ENCODE measurements at regions of chr12 and their contacts with region 1.

Region 1: DNA sequence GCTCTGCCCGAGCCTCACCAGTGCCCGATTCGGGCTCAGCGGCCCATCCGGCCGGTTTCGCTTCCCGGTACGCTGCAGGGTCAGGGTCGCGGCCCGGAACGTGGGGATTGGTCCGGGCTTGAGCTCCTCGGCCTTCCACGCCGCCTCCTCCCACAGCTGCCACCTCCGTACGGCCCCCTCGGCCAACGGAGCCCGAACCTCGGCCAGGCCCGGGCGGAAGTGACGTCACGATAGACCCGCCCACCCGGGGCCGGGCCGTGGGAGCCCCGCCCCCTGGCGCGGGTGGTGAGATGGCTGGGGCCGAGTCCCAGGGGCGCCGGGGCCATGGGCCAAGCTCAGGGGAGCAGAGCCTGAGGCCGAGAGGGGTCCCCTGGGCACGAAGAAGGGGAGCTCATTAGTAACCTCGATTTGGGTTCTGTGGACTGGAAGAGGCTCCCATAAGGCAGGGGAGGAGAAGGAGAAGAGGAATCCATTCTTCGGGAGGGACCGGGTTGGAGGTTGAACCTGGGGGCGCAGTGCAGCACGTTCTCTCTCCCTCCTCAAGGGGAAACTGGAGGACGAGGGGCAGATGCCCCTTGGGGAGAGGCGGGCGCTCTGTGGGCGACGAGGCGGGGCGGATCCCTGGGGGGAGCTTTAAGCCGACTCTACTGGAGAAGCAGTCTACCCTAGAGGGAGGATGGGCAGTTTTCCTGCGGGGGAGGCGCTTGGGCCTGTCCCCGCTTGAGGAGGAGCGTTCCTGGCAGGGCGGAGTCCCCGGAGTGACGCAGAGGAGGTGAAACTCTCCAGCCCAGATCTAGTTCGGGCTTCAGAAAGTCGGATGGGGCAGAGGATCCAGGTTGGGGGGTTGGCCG is at the start of gene MLF2:
- DNase-seq: peak; percentile 95 to 99 (median 97)
- ATAC-seq: peak; percentile 93
- H3K4me3 ChIP-seq: peak within 1 kb of the TSS; percentile 99
- H3K4me3 Mint-ChIP-seq: peak within 1 kb of the TSS; percentile 91 to 97 (median 96)
- H3K27ac ChIP-seq: peak within 1 kb of the TSS; percentile 97
- H3K27ac Mint-ChIP-seq: peak within 1 kb of the TSS; percentile 97 to 100 (median 99)
- H3K4me1 ChIP-seq: peaks cover 0 to 12% of the 10 kb centered on the region in 2 donors
- H3K4me1 Mint-ChIP-seq: peaks cover 10 to 44% (median 23%) of the 10 kb centered on the region in 7 donors
- H3K27me3 ChIP-seq: no peaks in the 10 kb centered on the region
- H3K27me3 Mint-ChIP-seq: no peaks in the 10 kb centered on the region
- total RNA-seq, gene MLF2: 84.6 to 141 (median 117) TPM

Region 2: DNA sequence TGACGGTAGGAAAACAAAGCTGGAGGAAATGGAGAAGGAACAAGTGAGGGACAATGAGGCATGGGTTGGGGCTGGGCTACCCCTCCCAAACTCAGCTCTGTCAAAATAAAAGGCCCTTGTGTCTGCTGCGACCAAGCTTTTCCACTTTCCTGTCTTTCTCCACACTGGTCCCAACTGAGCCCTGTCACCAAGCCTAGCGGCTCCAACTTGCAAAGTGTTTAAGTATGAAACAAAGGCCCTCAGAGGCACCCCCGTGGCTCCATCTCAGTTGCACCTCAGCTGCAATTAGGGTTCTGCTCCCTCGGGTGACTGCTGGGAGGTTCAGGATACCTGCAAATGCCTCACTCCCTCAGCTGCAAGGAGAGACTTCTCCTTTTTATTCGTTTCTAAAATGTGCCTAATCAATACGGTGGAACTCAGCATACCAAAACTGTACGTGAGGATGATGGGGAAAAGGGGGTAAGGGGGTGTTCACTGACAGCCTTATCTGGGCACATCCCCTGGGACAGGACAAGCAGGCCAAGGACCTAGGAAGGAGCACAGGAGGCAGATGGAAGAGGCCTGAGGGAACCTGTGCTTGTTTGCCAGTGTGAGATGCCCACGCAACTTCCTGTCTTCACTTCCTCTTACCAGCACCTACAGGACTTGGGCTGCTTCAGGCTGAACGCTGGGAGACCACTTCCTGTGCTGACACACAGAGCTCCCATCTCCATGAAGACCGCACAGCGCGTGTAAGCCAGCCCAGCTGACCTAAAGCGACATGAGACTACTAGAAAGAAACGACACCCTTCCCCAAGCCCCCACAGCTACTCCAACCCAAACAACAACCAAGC is 291.5 kb before region 1 on chr12:
- CTCF ChIA-PET with region 1: interaction called, 4 read pairs
- POLR2A ChIA-PET with region 1: no interaction called
- intact Hi-C with region 1: loop called in 1 of 2 experiments (anchors 1 kb)
- DNase-seq: peak; percentile 41 to 91 (median 87)
- ATAC-seq: peak; percentile 93
- H3K4me3 ChIP-seq: peak overlapping the region; percentile 54
- H3K4me3 Mint-ChIP-seq: peak overlapping the region; percentile 74 to 89 (median 85)
- H3K27ac ChIP-seq: peak overlapping the region; percentile 93
- H3K27ac Mint-ChIP-seq: peak overlapping the region; percentile 95 to 99 (median 98)
- H3K4me1 ChIP-seq: peaks cover 59 to 81% of the 10 kb centered on the region in 2 donors
- H3K4me1 Mint-ChIP-seq: peaks cover 66 to 95% (median 87%) of the 10 kb centered on the region in 7 donors
- H3K27me3 ChIP-seq: no peaks in the 10 kb centered on the region
- H3K27me3 Mint-ChIP-seq: no peaks in the 10 kb centered on the region

Region 3: DNA sequence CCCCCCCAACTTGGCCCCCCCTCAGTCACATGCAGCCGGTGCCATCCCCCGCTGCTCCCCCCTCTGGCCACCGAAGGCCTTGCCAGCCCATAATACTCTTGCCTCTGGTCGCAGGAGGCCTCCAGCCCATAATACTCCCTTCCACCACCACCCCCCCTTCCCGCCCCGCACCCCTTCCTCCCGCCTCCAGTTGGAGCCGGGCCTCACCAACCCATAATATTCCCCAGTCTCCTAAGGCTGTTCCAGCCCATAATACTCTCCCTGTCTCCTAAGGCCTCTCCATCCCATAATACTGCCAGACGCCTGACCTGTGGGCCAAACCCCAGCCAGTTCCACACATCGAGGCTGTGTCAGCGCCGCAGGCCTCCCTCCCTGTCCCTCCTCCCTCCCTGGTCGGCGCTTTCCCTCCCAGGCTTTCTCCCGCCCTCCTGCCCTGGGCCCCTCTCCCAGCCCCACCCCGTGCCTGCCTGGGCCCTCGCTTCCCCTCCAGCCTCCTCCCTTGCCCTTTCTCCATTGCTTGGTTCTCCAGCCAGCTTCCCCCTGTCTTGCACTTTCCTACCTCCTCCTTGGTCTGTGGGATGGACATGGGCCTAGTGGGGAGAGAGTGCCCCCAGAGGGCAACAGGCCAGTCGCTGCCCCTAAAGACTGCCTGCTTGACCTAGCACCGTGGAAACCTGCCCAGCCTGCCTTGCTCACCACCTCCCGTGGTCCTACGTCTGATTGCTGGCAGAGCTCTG is 139.2 kb before region 1 on chr12:
- CTCF ChIA-PET with region 1: interaction called, 6 read pairs
- POLR2A ChIA-PET with region 1: interaction called, 4 read pairs
- intact Hi-C with region 1: loop called in 1 of 2 experiments (anchors 1 kb)
- DNase-seq: peak in 2 of 9 donors; percentile 28 to 32
- ATAC-seq: peak; percentile 74
- H3K4me3 ChIP-seq: no peak overlapping the region
- H3K4me3 Mint-ChIP-seq: peak overlapping the region in 7 of 10 donors; percentile 30 to 70 (median 36)
- H3K27ac ChIP-seq: peak overlapping the region; percentile 64
- H3K27ac Mint-ChIP-seq: peak overlapping the region; percentile 51 to 91 (median 87)
- H3K4me1 ChIP-seq: peaks cover 20 to 30% of the 10 kb centered on the region in 2 donors
- H3K4me1 Mint-ChIP-seq: peaks cover 26 to 54% (median 48%) of the 10 kb centered on the region in 7 donors
- H3K27me3 ChIP-seq: no peaks in the 10 kb centered on the region
- H3K27me3 Mint-ChIP-seq: no peaks in the 10 kb centered on the region

Region 4: GRCh38 chr12:6735448-6736191 is 17.5 kb before region 1 on chr12:
- CTCF ChIA-PET with region 1: interaction called, 6 read pairs
- POLR2A ChIA-PET with region 1: interaction called, 5 read pairs
- intact Hi-C with region 1: loop called in 1 of 2 experiments (anchors 1 kb)
- DNase-seq: peak in 4 of 9 donors; percentile 23 to 39 (median 29)
- ATAC-seq: peak; percentile 81
- H3K4me3 ChIP-seq: no peak overlapping the region
- H3K4me3 Mint-ChIP-seq: no peak overlapping the region
- H3K27ac ChIP-seq: no peak overlapping the region
- H3K27ac Mint-ChIP-seq: peak overlapping the region in 1 of 9 donors; percentile 43
- H3K4me1 ChIP-seq: no peaks in the 10 kb centered on the region
- H3K4me1 Mint-ChIP-seq: peaks cover 0 to 10% (median 5%) of the 10 kb centered on the region in 7 donors
- H3K27me3 ChIP-seq: no peaks in the 10 kb centered on the region
- H3K27me3 Mint-ChIP-seq: no peaks in the 10 kb centered on the region

Region 5: DNA sequence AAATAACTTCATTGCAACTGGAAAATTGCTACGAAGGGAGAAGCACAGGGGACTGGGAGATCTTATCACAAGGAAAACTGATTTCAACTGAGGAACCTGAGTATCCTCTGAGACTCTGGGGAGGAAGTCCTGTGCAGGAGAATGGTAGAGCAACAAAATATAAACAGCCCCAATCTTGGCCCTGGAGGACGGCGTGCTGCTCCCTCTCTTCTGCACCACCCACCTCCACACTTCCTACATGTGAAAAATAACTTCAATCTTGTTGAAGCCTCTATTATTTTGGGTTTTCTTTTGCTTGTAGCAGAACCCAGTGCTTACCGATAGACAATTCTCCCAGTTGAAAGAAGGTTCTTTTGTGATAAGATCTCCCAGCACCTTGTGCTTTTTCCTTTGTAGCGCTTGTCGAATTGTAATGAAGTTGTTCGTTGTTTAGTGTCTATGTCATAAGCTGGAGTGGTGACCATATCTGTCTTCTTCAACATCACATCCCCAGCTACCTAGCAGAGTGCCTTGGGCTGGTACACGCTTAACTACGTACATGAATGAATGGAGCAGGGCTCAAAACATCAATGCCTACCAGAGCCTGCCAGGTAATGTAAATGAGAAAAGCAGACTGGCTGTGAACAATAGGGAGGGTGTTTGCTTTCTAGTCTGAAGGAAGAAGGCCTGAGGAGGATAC is 33.4 kb after region 1 on chr12:
- CTCF ChIA-PET with region 1: interaction called, 18 read pairs
- POLR2A ChIA-PET with region 1: interaction called, 40 read pairs
- intact Hi-C with region 1: loop called (anchors 1 kb)
- DNase-seq: peak in 7 of 9 donors; percentile 64 to 89 (median 87)
- ATAC-seq: peak; percentile 85
- H3K4me3 ChIP-seq: peak overlapping the region; percentile 4
- H3K4me3 Mint-ChIP-seq: peak overlapping the region; percentile 67 to 83 (median 76)
- H3K27ac ChIP-seq: peak overlapping the region; percentile 88
- H3K27ac Mint-ChIP-seq: peak overlapping the region; percentile 92 to 98 (median 96)
- H3K4me1 ChIP-seq: peaks cover 0 to 67% of the 10 kb centered on the region in 2 donors
- H3K4me1 Mint-ChIP-seq: peaks cover 35 to 79% (median 70%) of the 10 kb centered on the region in 7 donors
- H3K27me3 ChIP-seq: no peaks in the 10 kb centered on the region
- H3K27me3 Mint-ChIP-seq: no peaks in the 10 kb centered on the region

Region 6: DNA sequence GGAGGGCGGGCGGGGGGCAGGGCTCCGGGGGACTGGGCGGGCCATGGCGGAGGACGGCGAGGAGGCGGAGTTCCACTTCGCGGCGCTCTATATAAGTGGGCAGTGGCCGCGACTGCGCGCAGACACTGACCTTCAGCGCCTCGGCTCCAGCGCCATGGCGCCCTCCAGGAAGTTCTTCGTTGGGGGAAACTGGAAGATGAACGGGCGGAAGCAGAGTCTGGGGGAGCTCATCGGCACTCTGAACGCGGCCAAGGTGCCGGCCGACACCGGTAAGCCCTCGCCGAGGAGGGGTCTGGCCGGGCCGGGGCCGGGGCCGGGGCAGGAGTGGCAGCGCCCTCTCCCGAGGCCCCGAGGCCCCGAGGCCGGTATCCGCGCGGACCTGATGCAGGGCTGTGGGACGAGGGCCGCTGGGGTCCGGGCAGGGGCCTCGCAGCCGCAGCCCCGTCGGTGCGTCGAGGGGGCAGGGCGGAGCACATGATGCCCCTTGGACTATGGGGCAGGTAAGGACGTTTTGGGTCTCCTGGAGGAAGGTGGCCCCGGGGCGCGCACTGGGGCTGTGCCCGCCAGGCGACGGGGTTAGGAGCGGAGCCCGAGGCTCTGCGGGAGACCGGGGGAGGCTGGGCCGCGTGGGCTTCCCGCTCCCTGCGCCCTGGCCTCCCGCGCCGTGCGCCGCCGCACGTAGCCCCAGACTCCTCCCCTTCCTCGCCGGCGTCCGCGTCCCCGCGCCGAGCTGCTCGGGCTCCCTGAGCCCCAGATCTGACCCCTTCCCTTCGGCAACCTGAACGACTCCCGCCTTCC is 114.5 kb after region 1 on chr12 and contains the start of gene TPI1:
- CTCF ChIA-PET with region 1: interaction called, 4 read pairs
- POLR2A ChIA-PET with region 1: interaction called, 11 read pairs
- intact Hi-C with region 1: loop called in 1 of 2 experiments (anchors 1 kb)
- DNase-seq: peak; percentile 40 to 87 (median 52)
- ATAC-seq: peak; percentile 88
- H3K4me3 ChIP-seq: peak within 1 kb of the TSS; percentile 61
- H3K4me3 Mint-ChIP-seq: peak within 1 kb of the TSS; percentile 87 to 93 (median 91)
- H3K27ac ChIP-seq: peak within 1 kb of the TSS; percentile 82
- H3K27ac Mint-ChIP-seq: peak within 1 kb of the TSS; percentile 76 to 95 (median 87)
- H3K4me1 ChIP-seq: peaks cover 38 to 39% of the 10 kb centered on the region in 2 donors
- H3K4me1 Mint-ChIP-seq: peaks cover 34 to 55% (median 44%) of the 10 kb centered on the region in 7 donors
- H3K27me3 ChIP-seq: no peaks in the 10 kb centered on the region
- H3K27me3 Mint-ChIP-seq: no peaks in the 10 kb centered on the region
- total RNA-seq, gene TPI1: 89.7 to 1,293 (median 134) TPM

Region 7: GRCh38 chr12:6944381-6945186 is 191.4 kb after region 1 on chr12:
- CTCF ChIA-PET with region 1: no interaction called
- POLR2A ChIA-PET with region 1: no interaction called
- intact Hi-C with region 1: loop called in 1 of 2 experiments (anchors 2 kb)
- DNase-seq: peak; percentile 70 to 87 (median 84)
- ATAC-seq: peak; percentile 65
- H3K4me3 ChIP-seq: peak overlapping the region; percentile 94
- H3K4me3 Mint-ChIP-seq: peak overlapping the region; percentile 88 to 100 (median 96)
- H3K27ac ChIP-seq: peak overlapping the region; percentile 95
- H3K27ac Mint-ChIP-seq: peak overlapping the region; percentile 95 to 100 (median 98)
- H3K4me1 ChIP-seq: peaks cover 56% of the 10 kb centered on the region in 2 donors
- H3K4me1 Mint-ChIP-seq: peaks cover 42 to 75% (median 60%) of the 10 kb centered on the region in 7 donors
- H3K27me3 ChIP-seq: no peaks in the 10 kb centered on the region
- H3K27me3 Mint-ChIP-seq: no peaks in the 10 kb centered on the region

Region 8: GRCh38 chr12:7047306-7047705 is 294.2 kb after region 1 on chr12:
- CTCF ChIA-PET with region 1: no interaction called
- POLR2A ChIA-PET with region 1: no interaction called
- intact Hi-C with region 1: no loop called
- DNase-seq: no peak
- ATAC-seq: no peak
- H3K4me3 ChIP-seq: no peak overlapping the region
- H3K4me3 Mint-ChIP-seq: peak overlapping the region in 5 of 10 donors; percentile 8 to 71 (median 21)
- H3K27ac ChIP-seq: no peak overlapping the region
- H3K27ac Mint-ChIP-seq: peak overlapping the region in 4 of 9 donors; percentile 15 to 67 (median 45)
- H3K4me1 ChIP-seq: no peaks in the 10 kb centered on the region
- H3K4me1 Mint-ChIP-seq: peaks cover 0 to 21% (median 19%) of the 10 kb centered on the region in 7 donors
- H3K27me3 ChIP-seq: no peaks in the 10 kb centered on the region
- H3K27me3 Mint-ChIP-seq: peaks cover 0 to 24% (median 0%) of the 10 kb centered on the region in 5 donors

Region 9: DNA sequence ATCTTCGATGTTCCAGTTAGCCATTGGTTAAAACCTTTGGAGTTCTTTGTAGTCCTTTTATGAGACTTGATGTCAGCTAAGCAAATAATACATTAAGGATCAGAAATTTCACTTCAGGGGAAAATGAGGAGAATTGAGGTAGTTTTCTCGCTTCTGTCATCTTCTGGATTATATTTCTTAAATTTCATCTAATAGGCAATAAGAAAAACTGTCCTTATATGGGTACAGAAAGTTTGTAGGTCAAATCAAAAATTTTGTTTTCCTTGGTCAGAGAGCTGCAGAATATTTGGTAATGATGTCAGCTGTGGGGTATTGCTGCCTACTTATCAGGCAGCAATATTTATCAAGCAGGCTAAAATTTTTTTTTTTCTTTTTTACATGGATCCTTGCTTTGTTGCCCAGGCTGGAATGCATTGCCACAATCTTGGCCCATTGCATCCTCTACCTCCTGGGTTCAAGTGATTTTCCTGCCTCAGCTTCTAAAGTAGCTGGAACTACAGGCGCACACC is 1981.8 kb after region 1 on chr12:
- CTCF ChIA-PET with region 1: no interaction called
- POLR2A ChIA-PET with region 1: no interaction called
- intact Hi-C with region 1: no loop called
- DNase-seq: no peak
- ATAC-seq: no peak
- H3K4me3 ChIP-seq: no peak overlapping the region
- H3K4me3 Mint-ChIP-seq: no peak overlapping the region
- H3K27ac ChIP-seq: no peak overlapping the region
- H3K27ac Mint-ChIP-seq: no peak overlapping the region
- H3K4me1 ChIP-seq: no peaks in the 10 kb centered on the region
- H3K4me1 Mint-ChIP-seq: peaks cover 0 to 20% (median 9%) of the 10 kb centered on the region in 7 donors
- H3K27me3 ChIP-seq: no peaks in the 10 kb centered on the region
- H3K27me3 Mint-ChIP-seq: no peaks in the 10 kb centered on the region

Measured in naive thymus-derived CD4-positive, alpha-beta T cell (primary cell).